ENCODE measurements at regions of chr16 and their contacts with region 1.

Region 1: GRCh38 chr16:13957197-13958078 is 37.5 kb downstream of the ERCC4 start:
- DNase-seq: peak; percentile 70 to 94 (median 90)
- H3K4me3 ChIP-seq: peak overlapping the region in 2 of 4 donors; percentile 2 to 53
- H3K27ac ChIP-seq: peak overlapping the region; percentile 74 to 94 (median 89)
- H3K4me1 ChIP-seq: peaks cover 21 to 40% of the 10 kb centered on the region in 2 donors
- H3K27me3 ChIP-seq: no peaks in the 10 kb centered on the region
- CTCF ChIP-seq: no peak
- POLR2A ChIP-seq: peak in 1 of 2 donors; percentile 92

Region 2: GRCh38 chr16:14013571-14014282 is 56.3 kb after region 1 on chr16:
- intact Hi-C with region 1: loop called in 1 of 2 experiments (anchors 5 kb)
- DNase-seq: peak in 6 of 7 donors; percentile 42 to 70 (median 48)
- H3K4me3 ChIP-seq: peak overlapping the region in 1 of 4 donors; percentile 25
- H3K27ac ChIP-seq: peak overlapping the region; percentile 64 to 93 (median 83)
- H3K4me1 ChIP-seq: peaks cover 26 to 44% of the 10 kb centered on the region in 2 donors
- H3K27me3 ChIP-seq: no peaks in the 10 kb centered on the region
- CTCF ChIP-seq: no peak
- POLR2A ChIP-seq: peak in 1 of 2 donors; percentile 52